Heart left ventricle (tissue), 16 donors: ENCODE measurements at regions of chr19 and their contacts with region 1.

Region 1: DNA sequence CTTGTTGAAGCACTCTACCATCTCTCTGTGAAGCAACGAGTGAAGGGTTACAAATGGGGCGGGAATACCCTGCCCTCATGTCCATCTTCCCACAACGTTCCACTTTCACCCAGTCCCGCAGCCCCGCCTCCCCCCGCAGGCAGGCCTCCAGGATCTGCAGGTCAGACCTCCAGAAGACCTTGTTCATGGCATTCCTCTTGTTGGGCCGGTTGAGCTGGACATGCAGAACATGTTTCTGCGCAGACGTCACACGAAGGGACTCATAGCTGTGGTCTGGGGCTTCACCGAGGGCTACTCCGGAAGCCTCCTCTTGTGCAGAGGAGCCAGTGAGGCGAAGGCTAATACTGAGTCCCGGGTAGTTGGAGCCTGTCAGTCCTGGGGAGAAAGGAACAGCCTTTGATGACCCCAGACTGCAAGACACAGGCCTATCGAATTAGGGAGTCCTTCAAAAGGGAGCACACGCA is 420 bp downstream of the ECH1 start:
- DNase-seq: peak; percentile 56 to 88 (median 77)
- ATAC-seq: peak; percentile 56 to 74 (median 60)
- H3K4me3 ChIP-seq: peak overlapping the region; percentile 43 to 90 (median 72)
- H3K27ac ChIP-seq: peak overlapping the region; percentile 83 to 96 (median 94)
- H3K4me1 ChIP-seq: peaks cover 0 to 50% (median 34%) of the 10 kb centered on the region in 12 donors
- H3K27me3 ChIP-seq: no peaks in the 10 kb centered on the region
- CTCF ChIP-seq: no peak
- POLR2A ChIP-seq: no peak

Region 2: GRCh38 chr19:38634757-38635482 is 196.3 kb before region 1 on chr19:
- intact Hi-C with region 1: loop called in 2 of 10 experiments (anchors 10 kb)
- DNase-seq: peak; percentile 64 to 87 (median 75)
- ATAC-seq: peak in 3 of 4 donors; percentile 47 to 55 (median 50)
- H3K4me3 ChIP-seq: no peak overlapping the region
- H3K27ac ChIP-seq: peak overlapping the region in 10 of 12 donors; percentile 20 to 52 (median 38)
- H3K4me1 ChIP-seq: peaks cover 0 to 34% (median 23%) of the 10 kb centered on the region in 12 donors
- H3K27me3 ChIP-seq: no peaks in the 10 kb centered on the region
- CTCF ChIP-seq: peak; percentile 91 to 97 (median 95)
- POLR2A ChIP-seq: no peak

Region 3: GRCh38 chr19:38658462-38659306 is 172.5 kb before region 1 on chr19:
- intact Hi-C with region 1: loop called in 1 of 10 experiments (anchors 10 kb)
- DNase-seq: peak in 1 of 5 donors; percentile 66
- ATAC-seq: peak; percentile 74 to 83 (median 76)
- H3K4me3 ChIP-seq: peak overlapping the region in 5 of 12 donors; percentile 3 to 38 (median 15)
- H3K27ac ChIP-seq: peak overlapping the region; percentile 71 to 99 (median 96)
- H3K4me1 ChIP-seq: peaks cover 55 to 100% (median 99%) of the 10 kb centered on the region in 12 donors
- H3K27me3 ChIP-seq: no peaks in the 10 kb centered on the region
- CTCF ChIP-seq: no peak
- POLR2A ChIP-seq: no peak

Region 4: GRCh38 chr19:38769635-38770211 is 61.5 kb before region 1 on chr19:
- intact Hi-C with region 1: loop called in 1 of 10 experiments (anchors 2 kb)
- DNase-seq: peak; percentile 90 to 98 (median 93)
- ATAC-seq: peak; percentile 81 to 95 (median 90)
- H3K4me3 ChIP-seq: peak overlapping the region in 10 of 12 donors; percentile 23 to 54 (median 37)
- H3K27ac ChIP-seq: peak overlapping the region in 10 of 12 donors; percentile 42 to 77 (median 56)
- H3K4me1 ChIP-seq: peaks cover 0 to 12% (median 2%) of the 10 kb centered on the region in 12 donors
- H3K27me3 ChIP-seq: no peaks in the 10 kb centered on the region
- CTCF ChIP-seq: peak; percentile 67 to 97 (median 86)
- POLR2A ChIP-seq: no peak

Region 5: DNA sequence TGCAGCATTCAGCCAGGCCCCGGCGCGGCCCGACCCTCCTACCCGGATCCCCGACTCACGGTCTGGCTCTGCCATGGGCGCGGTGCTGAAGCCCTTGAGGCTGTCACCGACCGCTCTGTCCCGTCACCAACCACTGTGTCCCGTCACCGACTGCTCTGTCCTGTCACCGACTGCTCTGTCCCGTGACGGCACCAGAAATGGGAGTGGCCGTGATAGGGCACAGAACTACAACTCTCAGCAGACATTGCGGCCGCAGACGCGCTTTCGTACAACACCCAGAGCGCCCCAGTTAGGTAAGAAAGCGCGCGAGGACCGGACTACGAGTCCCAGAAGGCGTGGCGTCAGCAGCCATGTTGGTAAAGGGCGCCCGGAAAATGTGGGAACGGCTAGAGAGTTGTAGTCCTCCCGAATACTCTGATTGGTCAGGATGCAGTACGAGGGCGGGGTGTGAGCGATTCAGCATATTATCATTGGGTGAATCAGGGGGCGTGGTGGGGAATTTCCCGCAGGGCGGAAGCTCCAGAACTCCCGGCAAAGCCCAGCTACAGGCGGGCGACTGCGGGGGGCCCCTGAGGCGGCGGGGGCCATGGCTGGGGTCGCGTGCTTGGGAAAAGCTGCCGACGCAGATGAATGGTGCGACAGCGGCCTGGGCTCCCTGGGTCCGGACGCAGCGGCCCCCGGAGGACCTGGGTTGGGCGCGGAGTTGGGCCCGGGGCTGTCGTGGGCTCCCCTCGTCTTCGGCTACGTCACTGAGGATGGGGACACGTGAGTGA is 68.5 kb after region 1 on chr19 and contains the starts of genes NFKBIB and SIRT2:
- intact Hi-C with region 1: loop called in 2 of 10 experiments (anchors 1 to 10 kb)
- DNase-seq: peak; percentile 99 to 100 (median 100)
- ATAC-seq: peak; percentile 97 to 99 (median 98)
- H3K4me3 ChIP-seq: peak within 1 kb of the TSS; percentile 74 to 98 (median 92)
- H3K27ac ChIP-seq: peak within 1 kb of the TSS; percentile 38 to 95 (median 91)
- H3K4me1 ChIP-seq: peaks cover 6 to 46% (median 22%) of the 10 kb centered on the region in 12 donors
- H3K27me3 ChIP-seq: no peaks in the 10 kb centered on the region
- CTCF ChIP-seq: peak in 1 of 12 donors; percentile 13
- POLR2A ChIP-seq: peak; percentile 75 to 95
- total RNA-seq, gene NFKBIB: 17.2 to 38.6 (median 22.2) TPM
- total RNA-seq, gene SIRT2: 58.3 to 158 (median 62.4) TPM

Region 6: GRCh38 chr19:39110263-39110967 is 279.2 kb after region 1 on chr19:
- intact Hi-C with region 1: no loop called
- DNase-seq: peak in 1 of 5 donors; percentile 39
- ATAC-seq: peak in 3 of 4 donors; percentile 62 to 71 (median 69)
- H3K4me3 ChIP-seq: no peak overlapping the region
- H3K27ac ChIP-seq: no peak overlapping the region
- H3K4me1 ChIP-seq: no peaks in the 10 kb centered on the region
- H3K27me3 ChIP-seq: peaks cover 0 to 61% (median 15%) of the 10 kb centered on the region in 9 donors
- CTCF ChIP-seq: peak; percentile 54 to 79 (median 72)
- POLR2A ChIP-seq: no peak

Region 7: GRCh38 chr19:39328046-39328705 is 497.0 kb after region 1 on chr19:
- intact Hi-C with region 1: no loop called
- DNase-seq: peak; percentile 74 to 91 (median 82)
- ATAC-seq: peak; percentile 28 to 87 (median 78)
- H3K4me3 ChIP-seq: no peak overlapping the region
- H3K27ac ChIP-seq: no peak overlapping the region
- H3K4me1 ChIP-seq: peaks cover 0 to 11% (median 2%) of the 10 kb centered on the region in 12 donors
- H3K27me3 ChIP-seq: no peaks in the 10 kb centered on the region
- CTCF ChIP-seq: peak; percentile 91 to 97 (median 96)
- POLR2A ChIP-seq: no peak